HepG2 (cell line): ENCODE measurements at regions of chr4 and their contacts with region 1.

Region 1: GRCh38 chr4:1172971-1173757 is 781 bp upstream of the SPON2 start:
- DNase-seq: peak; percentile 89
- ATAC-seq: peak; percentile 78
- H3K4me3 ChIP-seq: peak overlapping the region; percentile 58 to 83 (median 81)
- H3K27ac ChIP-seq: peak overlapping the region; percentile 78
- H3K4me1 ChIP-seq: peaks cover 63% of the 10 kb centered on the region
- H3K27me3 ChIP-seq: peaks cover 0 to 1% of the 10 kb centered on the region in 2 experiments; a peak in 1 of 5 replicates
- CTCF ChIP-seq: no peak; the same call in 1 of the 2 replicates
- EP300 ChIP-seq: peak in 1 of 2 experiments; percentile 47; a peak in 1 of 4 replicates
- POLR2A ChIP-seq: no peak
- RAD21 ChIP-seq: no peak

Region 2: GRCh38 chr4:1154523-1155182 is 18.5 kb before region 1 on chr4:
- CTCF ChIA-PET with region 1: no interaction called
- POLR2A ChIA-PET with region 1: interaction called, 10 read pairs
- in situ Hi-C with region 1: no loop called
- intact Hi-C with region 1: no loop called
- DNase-seq: no peak
- ATAC-seq: no peak
- H3K4me3 ChIP-seq: no peak overlapping the region
- H3K27ac ChIP-seq: no peak overlapping the region
- H3K4me1 ChIP-seq: peaks cover 26% of the 10 kb centered on the region
- H3K27me3 ChIP-seq: peaks cover 7 to 38% of the 10 kb centered on the region in 2 experiments; a peak in 4 of 5 replicates
- CTCF ChIP-seq: no peak
- EP300 ChIP-seq: no peak
- POLR2A ChIP-seq: no peak
- RAD21 ChIP-seq: no peak

Region 3: GRCh38 chr4:1192091-1192492 is 18.9 kb after region 1 on chr4:
- CTCF ChIA-PET with region 1: no interaction called
- POLR2A ChIA-PET with region 1: interaction called, 15 read pairs
- in situ Hi-C with region 1: no loop called
- intact Hi-C with region 1: no loop called
- DNase-seq: no peak
- ATAC-seq: peak; percentile 79
- H3K4me3 ChIP-seq: peak overlapping the region in 1 of 3 experiments; percentile 5; a peak in 1 of 6 replicates
- H3K27ac ChIP-seq: no peak overlapping the region
- H3K4me1 ChIP-seq: peaks cover 15% of the 10 kb centered on the region
- H3K27me3 ChIP-seq: no peaks in the 10 kb centered on the region
- CTCF ChIP-seq: no peak
- EP300 ChIP-seq: no peak
- POLR2A ChIP-seq: no peak
- RAD21 ChIP-seq: no peak

Region 4: DNA sequence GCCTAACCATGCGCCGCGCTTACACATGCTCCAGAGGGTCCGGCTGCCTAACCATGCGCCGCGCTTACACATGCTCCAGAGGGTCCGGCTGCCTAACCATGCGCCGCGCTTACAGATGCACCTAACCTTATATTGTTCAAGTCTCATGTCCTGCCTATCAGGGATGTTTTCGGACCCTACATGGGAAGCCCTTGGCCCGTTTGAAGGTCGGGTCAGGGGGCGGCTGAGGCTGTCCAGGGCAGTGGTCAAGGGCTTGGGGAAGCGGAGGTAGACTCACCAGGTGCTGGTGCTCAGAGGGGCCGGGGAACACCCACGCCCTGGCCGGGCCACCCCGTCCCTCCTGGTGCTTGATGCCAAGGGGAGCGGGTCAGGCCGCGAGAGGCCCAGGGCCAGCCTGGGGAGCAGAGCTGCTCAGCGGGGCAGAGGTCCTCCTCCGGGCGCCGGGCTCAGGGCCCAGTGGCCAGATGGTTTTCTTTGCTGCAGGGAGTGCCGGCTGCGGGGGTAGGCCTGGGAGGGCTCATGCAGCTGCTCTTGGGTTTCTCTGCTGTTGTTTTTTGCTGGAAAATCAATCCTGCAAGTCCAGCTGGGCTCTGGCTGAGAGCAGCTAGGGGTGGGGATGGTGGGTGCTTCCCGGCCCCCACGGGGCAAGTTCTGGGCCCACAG is 34.6 kb after region 1 on chr4:
- CTCF ChIA-PET with region 1: no interaction called
- POLR2A ChIA-PET with region 1: interaction called, 95 read pairs
- in situ Hi-C with region 1: loop called (anchors 5 kb)
- intact Hi-C with region 1: loop called (anchors 1 kb)
- DNase-seq: no peak
- ATAC-seq: peak; percentile 10
- H3K4me3 ChIP-seq: no peak overlapping the region
- H3K27ac ChIP-seq: no peak overlapping the region
- H3K4me1 ChIP-seq: peaks cover 45% of the 10 kb centered on the region
- H3K27me3 ChIP-seq: no peaks in the 10 kb centered on the region
- CTCF ChIP-seq: no peak
- EP300 ChIP-seq: no peak
- POLR2A ChIP-seq: no peak
- RAD21 ChIP-seq: no peak

Region 5: DNA sequence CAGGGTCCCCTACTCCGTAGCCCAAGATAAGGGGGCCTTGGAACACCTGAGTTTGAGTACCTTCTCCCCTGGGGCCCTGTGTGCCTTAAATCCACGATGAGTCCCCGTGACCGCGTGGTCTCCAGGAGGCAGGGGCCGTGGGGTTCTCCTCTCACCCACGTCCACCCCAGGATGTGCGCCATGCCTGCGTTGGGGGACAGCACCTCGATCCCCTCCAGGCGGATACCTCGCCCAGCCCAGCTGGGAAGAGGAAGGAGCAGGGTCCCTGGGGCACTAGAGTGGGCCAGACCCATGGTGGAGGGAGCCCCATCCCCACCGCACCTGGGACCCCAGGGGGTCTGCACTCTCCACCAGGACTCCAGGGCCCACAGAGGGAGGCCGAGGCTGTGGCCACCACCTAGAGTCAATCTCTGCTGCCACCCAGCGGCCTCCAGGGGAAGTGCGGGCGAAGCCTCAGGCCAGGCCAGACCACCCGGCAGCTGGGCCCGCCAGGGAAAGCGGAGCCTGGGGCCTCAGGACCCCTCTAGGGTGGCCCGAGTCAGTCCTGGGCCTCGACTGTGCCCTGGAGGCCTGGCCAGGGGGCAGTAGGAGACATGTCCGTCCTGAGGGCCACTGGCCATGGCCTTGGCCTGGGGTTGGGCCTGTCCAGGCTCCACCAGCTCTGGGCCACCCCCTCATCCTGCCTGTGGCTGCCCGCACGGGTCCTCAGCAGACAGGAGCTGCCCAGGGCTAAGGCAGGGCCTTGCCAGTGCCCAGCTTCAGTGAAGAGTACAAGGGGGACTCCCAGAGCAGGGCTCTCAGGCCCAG is 455.9 kb after region 1 on chr4:
- CTCF ChIA-PET with region 1: no interaction called
- POLR2A ChIA-PET with region 1: no interaction called
- in situ Hi-C with region 1: no loop called
- intact Hi-C with region 1: no loop called
- DNase-seq: peak; percentile 30
- ATAC-seq: peak; percentile 84
- H3K4me3 ChIP-seq: no peak overlapping the region
- H3K27ac ChIP-seq: no peak overlapping the region
- H3K4me1 ChIP-seq: peaks cover 19% of the 10 kb centered on the region
- H3K27me3 ChIP-seq: peaks cover 0 to 30% of the 10 kb centered on the region in 2 experiments; a peak in 3 of 5 replicates
- CTCF ChIP-seq: peak; percentile 95
- EP300 ChIP-seq: no peak
- POLR2A ChIP-seq: no peak
- RAD21 ChIP-seq: peak; percentile 83

Region 6: GRCh38 chr4:2862528-2862927 is 1689.4 kb after region 1 on chr4:
- CTCF ChIA-PET with region 1: no interaction called
- POLR2A ChIA-PET with region 1: no interaction called
- in situ Hi-C with region 1: no loop called
- intact Hi-C with region 1: no loop called
- DNase-seq: no peak
- ATAC-seq: no peak; the same call in 2 of the 3 replicates
- H3K4me3 ChIP-seq: no peak overlapping the region
- H3K27ac ChIP-seq: peak overlapping the region; percentile 34
- H3K4me1 ChIP-seq: peaks cover 98% of the 10 kb centered on the region
- H3K27me3 ChIP-seq: no peaks in the 10 kb centered on the region
- CTCF ChIP-seq: no peak
- EP300 ChIP-seq: no peak
- POLR2A ChIP-seq: no peak
- RAD21 ChIP-seq: no peak